Naive thymus-derived CD4-positive, alpha-beta T cell (primary cell): ENCODE measurements at regions of chr9 and their contacts with region 1.

Region 1: GRCh38 chr9:74875656-74876413 is 11.9 kb downstream of the TRPM6 start:
- DNase-seq: no peak
- ATAC-seq: no peak
- H3K4me3 ChIP-seq: no peak overlapping the region
- H3K4me3 Mint-ChIP-seq: no peak overlapping the region
- H3K27ac ChIP-seq: no peak overlapping the region
- H3K27ac Mint-ChIP-seq: no peak overlapping the region
- H3K4me1 ChIP-seq: peaks cover 0 to 3% of the 10 kb centered on the region in 2 donors
- H3K4me1 Mint-ChIP-seq: peaks cover 0 to 2% (median 0%) of the 10 kb centered on the region in 7 donors
- H3K27me3 ChIP-seq: peaks cover 0 to 3% of the 10 kb centered on the region in 2 donors
- H3K27me3 Mint-ChIP-seq: peaks cover 12 to 41% (median 22%) of the 10 kb centered on the region in 5 donors

Region 2: DNA sequence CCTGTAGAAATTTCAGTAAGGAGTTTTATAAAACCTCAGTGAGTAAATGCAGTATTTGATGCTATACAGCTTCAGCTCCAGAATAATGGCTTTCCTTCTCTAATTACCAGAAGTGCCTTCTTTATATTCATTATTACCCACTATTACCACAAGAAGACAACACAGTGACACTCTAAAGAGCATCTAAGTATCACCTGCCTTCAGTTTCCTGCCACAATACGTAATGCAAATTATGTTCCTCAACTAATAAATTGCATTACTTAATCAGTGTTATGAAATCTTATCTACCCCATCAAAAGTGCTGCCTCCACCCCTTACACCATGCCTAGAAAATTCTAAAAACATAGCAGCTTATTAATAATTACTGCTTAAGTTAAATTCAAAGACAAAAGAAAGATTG is 80.0 kb before region 1 on chr9:
- CTCF ChIA-PET with region 1: no interaction called
- POLR2A ChIA-PET with region 1: no interaction called
- intact Hi-C with region 1: loop called in 1 of 2 experiments (anchors 10 kb)
- DNase-seq: no peak
- ATAC-seq: no peak
- H3K4me3 ChIP-seq: no peak overlapping the region
- H3K4me3 Mint-ChIP-seq: no peak overlapping the region
- H3K27ac ChIP-seq: no peak overlapping the region
- H3K27ac Mint-ChIP-seq: no peak overlapping the region
- H3K4me1 ChIP-seq: no peaks in the 10 kb centered on the region
- H3K4me1 Mint-ChIP-seq: peaks cover 0 to 2% (median 0%) of the 10 kb centered on the region in 7 donors
- H3K27me3 ChIP-seq: no peaks in the 10 kb centered on the region
- H3K27me3 Mint-ChIP-seq: peaks cover 5 to 16% (median 6%) of the 10 kb centered on the region in 5 donors

Region 3: GRCh38 chr9:75200892-75201470 is 325.1 kb after region 1 on chr9:
- CTCF ChIA-PET with region 1: no interaction called
- POLR2A ChIA-PET with region 1: no interaction called
- intact Hi-C with region 1: no loop called
- DNase-seq: peak in 7 of 9 donors; percentile 11 to 54 (median 50)
- ATAC-seq: peak; percentile 63
- H3K4me3 ChIP-seq: no peak overlapping the region
- H3K4me3 Mint-ChIP-seq: no peak overlapping the region
- H3K27ac ChIP-seq: no peak overlapping the region
- H3K27ac Mint-ChIP-seq: peak overlapping the region in 1 of 9 donors; percentile 0
- H3K4me1 ChIP-seq: no peaks in the 10 kb centered on the region
- H3K4me1 Mint-ChIP-seq: peaks cover 0 to 10% (median 3%) of the 10 kb centered on the region in 7 donors
- H3K27me3 ChIP-seq: no peaks in the 10 kb centered on the region
- H3K27me3 Mint-ChIP-seq: no peaks in the 10 kb centered on the region